Activated CD4-positive, alpha-beta memory T cell treated with anti-CD3 and anti-CD28 coated beads for 36 hours (primary cell): ENCODE measurements at regions of chr1 and their contacts with region 1.

Region 1: GRCh38 chr1:168439456-168440375 is 104.1 kb downstream of the XCL2 start:
- DNase-seq: peak; percentile 86
- H3K4me3 Mint-ChIP-seq: peak overlapping the region; percentile 46
- H3K27ac Mint-ChIP-seq: no peak overlapping the region
- H3K4me1 Mint-ChIP-seq: peaks cover 31% of the 10 kb centered on the region
- H3K27me3 Mint-ChIP-seq: no peaks in the 10 kb centered on the region

Region 2: GRCh38 chr1:168421399-168422004 is 18.2 kb before region 1 on chr1:
- CTCF ChIA-PET with region 1: interaction called, 21 read pairs
- POLR2A ChIA-PET with region 1: no interaction called
- intact Hi-C with region 1: no loop called
- DNase-seq: peak; percentile 29
- H3K4me3 Mint-ChIP-seq: peak overlapping the region; percentile 49
- H3K27ac Mint-ChIP-seq: peak overlapping the region; percentile 78
- H3K4me1 Mint-ChIP-seq: peaks cover 33% of the 10 kb centered on the region
- H3K27me3 Mint-ChIP-seq: no peaks in the 10 kb centered on the region

Region 3: DNA sequence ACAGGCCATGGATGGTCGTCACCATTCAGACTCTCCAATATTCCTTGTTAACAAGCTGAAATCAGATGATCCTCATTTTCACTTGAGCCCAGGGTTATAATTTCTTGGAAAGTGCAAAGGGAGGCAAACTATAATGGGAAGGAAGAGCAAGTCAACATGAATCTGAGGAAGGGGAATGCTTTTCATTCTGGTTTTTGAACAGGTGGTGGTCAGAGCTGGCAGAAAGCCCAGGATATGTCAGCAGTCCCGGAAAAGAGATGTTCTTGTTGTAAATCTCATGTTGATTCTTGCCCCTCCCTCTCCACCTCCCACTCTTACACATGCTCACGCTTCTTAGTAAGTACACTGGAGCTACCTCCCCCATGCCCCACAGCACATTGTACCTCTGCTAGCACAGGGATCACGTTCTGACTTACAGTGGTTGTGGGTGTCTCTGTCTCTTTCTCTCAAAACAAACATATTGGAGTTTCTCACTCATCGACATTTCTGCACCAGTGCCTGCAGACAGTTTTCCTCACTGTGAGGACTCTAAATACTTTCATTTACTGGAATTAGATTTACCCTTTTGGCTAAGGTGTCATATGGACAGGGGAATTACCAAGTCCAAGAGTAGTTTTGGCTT is 26.5 kb after region 1 on chr1:
- CTCF ChIA-PET with region 1: interaction called, 9 read pairs
- POLR2A ChIA-PET with region 1: interaction called, 5 read pairs
- intact Hi-C with region 1: loop called (anchors 1 kb)
- DNase-seq: peak; percentile 81
- H3K4me3 Mint-ChIP-seq: no peak overlapping the region
- H3K27ac Mint-ChIP-seq: peak overlapping the region; percentile 75
- H3K4me1 Mint-ChIP-seq: peaks cover 58% of the 10 kb centered on the region
- H3K27me3 Mint-ChIP-seq: no peaks in the 10 kb centered on the region

Region 4: DNA sequence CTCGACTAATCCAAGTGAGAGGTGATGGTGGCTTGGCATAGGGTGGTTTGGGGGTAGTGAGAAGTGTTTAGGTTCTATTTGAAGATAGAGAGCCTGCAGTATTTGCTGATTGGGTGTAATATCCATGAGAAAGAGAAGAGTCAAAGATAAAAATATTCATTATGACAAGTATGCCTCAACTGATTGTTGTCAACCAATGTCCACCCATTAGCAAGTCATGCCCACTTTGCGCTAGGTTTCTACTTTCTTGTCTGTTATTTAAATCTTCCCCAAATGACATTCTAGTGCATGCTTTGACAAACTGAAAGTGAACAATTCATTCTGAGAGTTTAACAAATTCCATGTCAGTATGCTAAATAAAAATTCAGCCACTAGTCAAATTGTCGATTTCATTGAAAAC is 132.9 kb after region 1 on chr1:
- CTCF ChIA-PET with region 1: interaction called, 10 read pairs
- POLR2A ChIA-PET with region 1: no interaction called
- intact Hi-C with region 1: loop called (anchors 1 kb)
- DNase-seq: no peak
- H3K4me3 Mint-ChIP-seq: no peak overlapping the region
- H3K27ac Mint-ChIP-seq: no peak overlapping the region
- H3K4me1 Mint-ChIP-seq: peaks cover 18% of the 10 kb centered on the region
- H3K27me3 Mint-ChIP-seq: peaks cover 2% of the 10 kb centered on the region

Region 5: DNA sequence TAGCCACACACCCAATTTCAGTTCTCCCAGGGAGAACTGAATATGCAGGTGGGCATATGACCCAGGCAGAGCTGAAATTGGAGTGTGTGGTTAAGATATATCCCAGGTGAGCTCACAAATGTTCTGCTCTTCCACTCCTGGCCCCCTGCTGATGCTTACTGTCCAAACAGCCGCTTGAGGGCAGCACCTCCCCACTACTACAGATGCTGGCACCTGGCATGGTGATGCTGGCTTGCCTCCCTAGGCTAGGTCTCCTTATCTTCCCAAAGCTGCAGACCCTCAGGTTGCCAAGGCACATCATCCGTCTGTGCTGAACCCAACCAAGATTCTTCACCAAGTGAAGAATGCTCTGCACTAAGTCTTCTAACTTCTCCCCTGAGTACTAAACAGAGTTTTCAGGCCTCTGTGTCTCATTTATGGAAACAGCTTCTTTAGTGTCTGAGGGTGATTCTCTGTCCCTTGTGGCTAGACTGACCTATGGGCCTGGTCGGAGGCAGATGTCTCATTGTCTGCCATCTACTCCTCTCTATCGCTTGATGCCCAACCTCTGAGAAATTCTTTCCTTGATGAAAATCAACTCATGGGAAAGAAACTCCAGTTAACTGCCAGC is 163.9 kb after region 1 on chr1:
- CTCF ChIA-PET with region 1: interaction called, 20 read pairs
- POLR2A ChIA-PET with region 1: no interaction called
- intact Hi-C with region 1: no loop called
- DNase-seq: peak; percentile 77
- H3K4me3 Mint-ChIP-seq: no peak overlapping the region
- H3K27ac Mint-ChIP-seq: no peak overlapping the region
- H3K4me1 Mint-ChIP-seq: no peaks in the 10 kb centered on the region
- H3K27me3 Mint-ChIP-seq: peaks cover 7% of the 10 kb centered on the region

Region 6: DNA sequence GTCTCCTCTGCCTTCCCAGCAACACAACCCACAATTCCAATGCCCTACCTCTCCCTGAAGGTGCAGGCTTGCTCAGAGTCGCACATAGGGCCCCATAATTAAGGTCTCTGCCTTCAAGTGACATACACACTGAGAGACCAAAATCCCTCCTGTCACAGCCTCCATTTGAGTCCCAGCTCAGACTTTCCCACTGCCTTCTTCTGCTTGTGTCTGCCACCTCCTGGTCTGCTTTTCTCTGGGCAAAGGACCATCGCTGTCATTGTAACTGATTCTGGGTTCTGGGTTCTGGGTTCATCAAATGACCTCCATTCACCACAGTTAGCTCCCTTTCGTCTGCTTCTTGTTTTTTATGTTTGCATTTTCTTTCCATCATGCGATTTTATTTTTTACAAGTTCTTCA is 547.6 kb after region 1 on chr1:
- CTCF ChIA-PET with region 1: no interaction called
- POLR2A ChIA-PET with region 1: no interaction called
- intact Hi-C with region 1: no loop called
- DNase-seq: no peak
- H3K4me3 Mint-ChIP-seq: no peak overlapping the region
- H3K27ac Mint-ChIP-seq: no peak overlapping the region
- H3K4me1 Mint-ChIP-seq: peaks cover 19% of the 10 kb centered on the region
- H3K27me3 Mint-ChIP-seq: peaks cover 18% of the 10 kb centered on the region

Region 7: DNA sequence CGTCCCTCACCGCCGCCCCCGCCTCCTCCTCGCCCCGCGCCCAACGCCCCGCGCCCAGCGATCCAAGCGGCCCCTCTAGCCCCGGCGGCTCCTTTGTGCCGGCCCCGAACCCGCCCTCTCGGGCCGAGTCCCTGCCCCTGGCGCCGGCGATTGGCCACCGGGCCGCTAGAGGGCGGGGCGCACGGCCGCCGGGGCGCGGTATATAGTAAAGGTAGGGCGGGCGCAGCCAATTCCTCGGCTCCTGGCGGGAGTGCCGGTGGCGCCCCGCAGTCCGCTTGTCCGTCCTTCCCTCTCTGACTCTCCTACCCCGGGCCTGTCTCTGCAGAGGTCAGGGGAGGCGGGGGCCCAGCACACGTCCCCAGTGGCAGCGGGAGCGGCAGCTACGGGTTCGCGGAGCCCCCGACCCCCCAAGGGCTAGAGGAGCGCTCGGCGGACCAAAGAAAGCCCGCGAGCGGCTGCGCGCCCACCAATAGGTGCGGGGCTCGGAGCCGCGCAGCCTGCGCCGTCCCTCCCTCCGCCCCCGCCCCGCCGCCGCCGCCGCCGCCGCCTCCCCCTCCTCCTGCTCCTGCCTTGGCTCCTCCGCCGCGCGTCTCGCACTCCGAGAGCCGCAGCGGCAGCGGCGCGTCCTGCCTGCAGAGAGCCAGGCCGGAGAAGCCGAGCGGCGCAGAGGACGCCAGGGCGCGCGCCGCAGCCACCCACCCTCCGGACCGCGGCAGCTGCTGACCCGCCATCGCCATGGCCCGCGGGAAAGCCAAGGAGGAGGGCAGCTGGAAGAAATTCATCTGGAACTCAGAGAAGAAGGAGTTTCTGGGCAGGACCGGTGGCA is 666.6 kb after region 1 on chr1 and contains the start of gene ATP1B1:
- CTCF ChIA-PET with region 1: no interaction called
- POLR2A ChIA-PET with region 1: no interaction called
- intact Hi-C with region 1: loop called (anchors 10 kb)
- DNase-seq: peak; percentile 82
- H3K4me3 Mint-ChIP-seq: peak within 1 kb of the TSS; percentile 71
- H3K27ac Mint-ChIP-seq: peak within 1 kb of the TSS; percentile 79
- H3K4me1 Mint-ChIP-seq: peaks cover 36% of the 10 kb centered on the region
- H3K27me3 Mint-ChIP-seq: peaks cover 24% of the 10 kb centered on the region
- total RNA-seq, gene ATP1B1: 7.7 to 8.3 TPM

Region 8: DNA sequence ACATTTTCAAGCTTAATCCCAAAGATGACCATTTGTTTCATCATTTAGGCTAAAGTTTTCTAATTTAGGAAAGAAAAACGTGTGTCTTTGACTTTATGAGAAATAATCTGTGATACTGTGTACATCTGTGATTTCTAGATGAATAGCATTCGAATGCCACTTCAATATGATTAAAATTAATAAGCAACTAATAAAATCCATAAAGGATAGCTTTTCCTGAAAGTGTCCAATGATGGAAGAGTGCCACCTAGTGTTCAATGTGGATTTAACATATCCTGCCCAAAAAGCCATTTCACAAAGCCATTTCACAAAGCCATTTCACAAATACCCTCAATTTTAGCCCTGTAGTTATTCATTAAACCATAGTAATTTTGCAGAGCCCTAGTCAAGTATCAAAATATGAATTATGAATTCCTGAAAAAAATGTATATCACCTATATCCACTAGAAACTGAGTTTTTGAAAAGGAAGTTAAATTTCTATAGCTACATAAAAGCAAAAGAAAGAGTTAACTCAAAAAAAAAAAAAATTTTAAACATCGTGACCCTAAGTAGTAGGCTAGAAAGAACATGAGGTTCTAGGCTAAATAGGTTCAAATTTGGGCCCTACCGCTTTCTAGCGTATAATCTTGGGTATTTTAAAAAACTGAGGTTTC is 908.8 kb after region 1 on chr1:
- CTCF ChIA-PET with region 1: interaction called, 16 read pairs
- POLR2A ChIA-PET with region 1: no interaction called
- intact Hi-C with region 1: loop called (anchors 5 kb)
- DNase-seq: no peak
- H3K4me3 Mint-ChIP-seq: no peak overlapping the region
- H3K27ac Mint-ChIP-seq: no peak overlapping the region
- H3K4me1 Mint-ChIP-seq: peaks cover 6% of the 10 kb centered on the region
- H3K27me3 Mint-ChIP-seq: no peaks in the 10 kb centered on the region